Ovary (tissue), 10 donors: ENCODE measurements at regions of chr17 and their contacts with region 1.

Region 1: DNA sequence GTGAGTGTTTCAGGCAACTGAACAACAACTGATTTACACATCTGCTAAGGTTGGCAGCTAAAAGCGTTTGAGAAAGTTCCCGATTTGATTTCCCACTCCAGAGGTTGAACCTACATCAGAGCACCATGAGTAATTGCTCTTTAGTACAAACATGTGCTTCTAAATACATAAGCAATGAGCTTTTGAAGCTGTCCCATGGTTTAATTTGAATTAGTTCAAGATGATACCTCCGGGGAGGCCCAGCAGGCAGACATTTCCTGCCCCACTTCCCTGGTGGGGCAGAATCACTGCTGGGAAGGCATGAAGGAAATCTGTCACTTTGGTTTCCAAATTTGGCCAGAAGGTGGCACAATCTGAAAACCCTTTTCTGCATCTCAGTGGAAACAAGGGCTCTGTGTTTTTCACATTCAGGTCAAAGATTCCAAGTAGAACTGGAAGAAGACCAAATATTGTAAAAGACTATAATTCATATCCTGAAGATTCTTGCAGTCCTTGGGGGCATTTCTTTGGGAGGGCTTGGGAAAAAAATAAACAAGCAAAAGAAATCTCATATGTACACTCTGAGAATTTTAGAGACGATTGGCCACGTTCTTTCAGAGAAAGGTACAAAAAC is 176.2 kb upstream of the FAM20A start:
- DNase-seq: peak in 3 of 5 donors; percentile 52 to 81 (median 65)
- H3K4me3 ChIP-seq: no peak overlapping the region
- H3K27ac ChIP-seq: peak overlapping the region; percentile 7 to 77
- H3K4me1 ChIP-seq: peaks cover 10% of the 10 kb centered on the region
- H3K27me3 ChIP-seq: no peaks in the 10 kb centered on the region
- CTCF ChIP-seq: peak; percentile 51 to 87 (median 77)
- EP300 ChIP-seq: no peak
- POLR2A ChIP-seq: no peak

Region 2: GRCh38 chr17:68909066-68909465 is 131.7 kb after region 1 on chr17:
- intact Hi-C with region 1: loop called in 1 of 4 experiments (anchors 5 kb)
- DNase-seq: peak in 4 of 5 donors; percentile 20 to 70 (median 48)
- H3K4me3 ChIP-seq: no peak overlapping the region
- H3K27ac ChIP-seq: peak overlapping the region in 1 of 2 donors; percentile 65
- H3K4me1 ChIP-seq: peaks cover 6% of the 10 kb centered on the region
- H3K27me3 ChIP-seq: no peaks in the 10 kb centered on the region
- CTCF ChIP-seq: no peak
- EP300 ChIP-seq: no peak
- POLR2A ChIP-seq: no peak

Region 3: GRCh38 chr17:68972119-68972704 is 194.9 kb after region 1 on chr17:
- intact Hi-C with region 1: loop called in 2 of 4 experiments (anchors 2 to 5 kb)
- DNase-seq: peak in 2 of 5 donors; percentile 36 to 49
- H3K4me3 ChIP-seq: no peak overlapping the region
- H3K27ac ChIP-seq: no peak overlapping the region
- H3K4me1 ChIP-seq: peaks cover 5% of the 10 kb centered on the region
- H3K27me3 ChIP-seq: no peaks in the 10 kb centered on the region
- CTCF ChIP-seq: peak; percentile 56 to 87 (median 78)
- EP300 ChIP-seq: no peak
- POLR2A ChIP-seq: no peak

Region 4: GRCh38 chr17:69235338-69235930 is 458.1 kb after region 1 on chr17:
- intact Hi-C with region 1: loop called (anchors 2 to 5 kb)
- DNase-seq: peak; percentile 64 to 87 (median 72)
- H3K4me3 ChIP-seq: no peak overlapping the region
- H3K27ac ChIP-seq: no peak overlapping the region
- H3K4me1 ChIP-seq: peaks cover 2% of the 10 kb centered on the region
- H3K27me3 ChIP-seq: no peaks in the 10 kb centered on the region
- CTCF ChIP-seq: peak; percentile 45 to 75 (median 58)
- EP300 ChIP-seq: no peak
- POLR2A ChIP-seq: no peak